CD8-positive, alpha-beta T cell (primary cell): ENCODE measurements at regions of chr1 and their contacts with region 1.

Region 1: DNA sequence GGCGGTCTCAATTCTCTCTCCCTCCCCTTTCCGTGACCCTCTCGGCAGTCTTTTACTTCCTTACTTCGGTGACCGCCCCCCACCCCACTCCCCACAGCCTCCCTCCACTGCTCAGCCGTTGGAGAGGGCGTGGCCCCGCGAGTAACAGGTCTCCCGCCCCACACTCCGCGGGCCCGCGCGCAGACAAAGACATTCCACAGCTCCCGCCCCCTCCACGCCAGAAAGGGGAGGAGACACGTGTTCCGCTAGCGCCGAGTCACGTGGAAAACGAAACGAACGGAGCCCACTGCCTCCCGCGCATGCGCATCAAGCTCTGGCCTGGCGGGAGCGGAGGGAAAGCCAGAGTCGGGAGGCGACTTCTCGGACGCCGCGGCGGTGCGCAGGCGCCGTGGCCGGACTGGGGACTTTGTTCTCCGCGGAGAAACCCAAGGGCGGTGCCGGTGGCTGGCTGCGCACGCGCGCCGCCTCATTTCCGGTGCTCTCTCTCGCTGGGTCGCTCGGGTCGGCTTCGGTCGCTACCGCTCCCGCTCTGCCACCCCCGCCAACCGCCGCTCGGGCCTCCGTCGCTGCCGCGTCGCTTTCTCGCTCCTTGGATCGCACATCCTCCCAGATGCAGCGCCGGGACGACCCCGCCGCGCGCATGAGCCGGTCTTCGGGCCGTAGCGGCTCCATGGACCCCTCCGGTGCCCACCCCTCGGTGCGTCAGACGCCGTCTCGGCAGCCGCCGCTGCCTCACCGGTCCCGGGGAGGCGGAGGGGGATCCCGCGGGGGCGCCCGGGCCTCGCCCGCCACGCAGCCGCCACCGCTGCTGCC is at the start of gene KHDRBS1:
- DNase-seq: peak; percentile 92 to 100 (median 97)
- ATAC-seq: peak; percentile 85
- H3K4me3 ChIP-seq: peak within 1 kb of the TSS; percentile 82 to 98
- H3K4me3 Mint-ChIP-seq: peak within 1 kb of the TSS; percentile 96
- H3K27ac ChIP-seq: peak within 1 kb of the TSS; percentile 93
- H3K27ac Mint-ChIP-seq: peak within 1 kb of the TSS; percentile 99
- H3K4me1 ChIP-seq: peaks cover 28% of the 10 kb centered on the region
- H3K4me1 Mint-ChIP-seq: peaks cover 30% of the 10 kb centered on the region
- H3K27me3 ChIP-seq: no peaks in the 10 kb centered on the region
- H3K27me3 Mint-ChIP-seq: no peaks in the 10 kb centered on the region
- CTCF ChIP-seq: no peak
- total RNA-seq, gene KHDRBS1: 102 TPM

Region 2: GRCh38 chr1:31938174-31938950 is 75.2 kb before region 1 on chr1 and contains the start of gene PTP4A2:
- CTCF ChIA-PET with region 1: interaction called, 5 read pairs
- POLR2A ChIA-PET with region 1: interaction called, 4 read pairs
- intact Hi-C with region 1: loop called (anchors 1 to 2 kb)
- DNase-seq: peak; percentile 54 to 91 (median 79)
- ATAC-seq: peak; percentile 60
- H3K4me3 ChIP-seq: peak within 1 kb of the TSS; percentile 68 to 93
- H3K4me3 Mint-ChIP-seq: peak within 1 kb of the TSS; percentile 100
- H3K27ac ChIP-seq: peak within 1 kb of the TSS; percentile 57 to 85
- H3K27ac Mint-ChIP-seq: peak within 1 kb of the TSS; percentile 99
- H3K4me1 ChIP-seq: peaks cover 77% of the 10 kb centered on the region
- H3K4me1 Mint-ChIP-seq: peaks cover 70% of the 10 kb centered on the region
- H3K27me3 ChIP-seq: no peaks in the 10 kb centered on the region
- H3K27me3 Mint-ChIP-seq: no peaks in the 10 kb centered on the region
- CTCF ChIP-seq: peak; percentile 43
- total RNA-seq, gene PTP4A2: 257 to 278 TPM

Region 3: DNA sequence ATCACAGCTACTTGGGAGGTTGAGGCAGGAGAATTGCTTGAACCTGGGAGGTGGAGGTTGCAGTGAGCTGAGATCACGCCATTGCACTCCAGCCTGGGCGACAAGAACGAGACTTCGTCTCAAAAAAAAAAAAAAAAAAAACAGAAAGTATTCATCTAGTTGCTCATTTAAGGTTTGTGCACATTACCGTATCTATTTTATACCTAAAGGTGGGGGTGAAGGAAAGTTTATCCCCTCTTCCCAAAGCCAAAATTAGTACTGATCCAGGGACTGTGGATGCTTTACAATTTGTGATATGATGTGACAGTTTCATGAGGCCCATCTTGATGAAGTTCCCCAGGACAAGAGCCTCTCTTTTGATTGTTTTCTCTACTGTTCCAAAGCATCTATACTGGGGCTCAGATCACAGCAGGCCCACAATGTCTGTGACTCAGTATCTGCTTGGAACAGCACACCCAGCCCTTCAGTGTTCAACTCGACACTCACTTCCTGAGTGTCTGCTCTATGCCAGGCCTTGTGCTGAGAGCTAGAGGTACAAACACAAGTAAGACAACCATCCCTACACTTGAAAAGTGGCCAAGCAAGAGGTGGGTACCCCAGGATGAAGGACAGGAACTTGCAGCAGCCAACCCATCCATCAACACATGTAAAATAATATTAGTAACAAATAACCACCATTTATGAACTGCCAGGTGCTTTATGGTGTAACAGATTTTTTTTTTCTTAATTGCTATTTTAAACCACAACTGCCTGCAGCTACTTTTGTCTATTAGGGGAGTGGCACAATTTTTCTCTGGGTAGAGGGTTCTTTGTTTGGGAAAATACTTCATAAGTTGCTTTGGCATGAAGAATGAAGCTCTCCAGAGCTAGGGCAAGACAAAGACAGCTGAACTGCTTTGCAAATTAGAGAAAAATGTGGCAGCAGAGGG is 28.9 kb before region 1 on chr1:
- CTCF ChIA-PET with region 1: interaction called, 5 read pairs
- POLR2A ChIA-PET with region 1: interaction called, 11 read pairs
- intact Hi-C with region 1: loop called in 1 of 2 experiments (anchors 2 kb)
- DNase-seq: peak in 8 of 9 experiments; percentile 16 to 66 (median 46)
- ATAC-seq: peak; percentile 69
- H3K4me3 ChIP-seq: no peak overlapping the region
- H3K4me3 Mint-ChIP-seq: peak overlapping the region; percentile 48
- H3K27ac ChIP-seq: peak overlapping the region in 1 of 2 experiments; percentile 80
- H3K27ac Mint-ChIP-seq: peak overlapping the region; percentile 92
- H3K4me1 ChIP-seq: peaks cover 52% of the 10 kb centered on the region
- H3K4me1 Mint-ChIP-seq: peaks cover 56% of the 10 kb centered on the region
- H3K27me3 ChIP-seq: no peaks in the 10 kb centered on the region
- H3K27me3 Mint-ChIP-seq: no peaks in the 10 kb centered on the region
- CTCF ChIP-seq: no peak

Region 4: DNA sequence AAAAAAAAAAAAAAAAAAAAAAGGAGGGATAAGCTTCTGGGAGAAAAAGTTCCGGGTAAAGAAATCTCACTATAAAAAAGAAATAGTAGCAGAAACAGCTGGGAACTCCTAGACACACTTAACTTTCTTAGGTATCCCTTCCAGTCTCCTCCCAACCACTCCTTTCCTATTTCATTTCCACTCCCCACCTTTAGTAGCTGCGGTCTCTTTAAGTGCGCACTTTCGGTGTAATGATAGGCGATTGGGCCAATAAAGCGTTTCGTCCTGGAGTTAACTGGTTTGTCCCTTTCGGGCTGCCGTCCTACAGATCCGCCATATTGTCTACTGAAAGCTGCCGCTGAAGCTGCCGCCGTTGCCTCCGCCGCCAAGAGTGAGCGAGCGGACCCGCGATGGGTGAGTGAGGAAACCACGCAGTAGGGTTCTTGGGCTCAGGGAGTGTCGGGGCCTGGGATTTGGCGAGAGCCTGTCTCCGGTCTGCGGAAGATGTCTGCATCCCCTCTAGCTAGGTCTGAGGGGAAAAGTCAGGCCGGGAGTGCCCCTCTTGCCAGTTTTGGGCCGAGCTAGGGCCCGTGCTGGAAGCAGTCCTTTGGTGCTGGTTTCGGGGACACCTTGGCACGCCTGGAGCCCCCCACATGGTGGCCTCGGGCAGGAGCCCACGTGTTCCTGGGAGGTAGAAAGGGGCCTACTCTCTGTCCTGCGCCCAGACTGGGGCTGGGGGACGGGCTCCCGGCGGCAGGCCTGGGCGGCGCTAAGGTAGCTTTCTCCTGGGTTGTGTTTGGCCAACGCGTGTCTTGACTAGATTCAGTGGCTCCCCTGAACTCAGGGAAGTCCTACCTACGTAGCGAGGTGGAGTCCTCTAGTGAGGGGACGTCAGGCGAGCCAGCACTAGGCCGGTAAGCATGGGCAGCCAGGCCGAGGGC is 94.4 kb after region 1 on chr1 and contains the start of gene KPNA6:
- CTCF ChIA-PET with region 1: interaction called, 3 read pairs
- POLR2A ChIA-PET with region 1: interaction called, 3 read pairs
- intact Hi-C with region 1: loop called in 1 of 2 experiments (anchors 1 kb)
- DNase-seq: peak; percentile 83 to 98 (median 90)
- ATAC-seq: peak; percentile 89
- H3K4me3 ChIP-seq: peak within 1 kb of the TSS; percentile 87 to 95
- H3K4me3 Mint-ChIP-seq: peak within 1 kb of the TSS; percentile 98
- H3K27ac ChIP-seq: peak within 1 kb of the TSS; percentile 84 to 93
- H3K27ac Mint-ChIP-seq: peak within 1 kb of the TSS; percentile 98
- H3K4me1 ChIP-seq: peaks cover 45% of the 10 kb centered on the region
- H3K4me1 Mint-ChIP-seq: peaks cover 50% of the 10 kb centered on the region
- H3K27me3 ChIP-seq: no peaks in the 10 kb centered on the region
- H3K27me3 Mint-ChIP-seq: no peaks in the 10 kb centered on the region
- CTCF ChIP-seq: no peak
- total RNA-seq, gene KPNA6: 51.7 to 58.7 TPM

Region 5: DNA sequence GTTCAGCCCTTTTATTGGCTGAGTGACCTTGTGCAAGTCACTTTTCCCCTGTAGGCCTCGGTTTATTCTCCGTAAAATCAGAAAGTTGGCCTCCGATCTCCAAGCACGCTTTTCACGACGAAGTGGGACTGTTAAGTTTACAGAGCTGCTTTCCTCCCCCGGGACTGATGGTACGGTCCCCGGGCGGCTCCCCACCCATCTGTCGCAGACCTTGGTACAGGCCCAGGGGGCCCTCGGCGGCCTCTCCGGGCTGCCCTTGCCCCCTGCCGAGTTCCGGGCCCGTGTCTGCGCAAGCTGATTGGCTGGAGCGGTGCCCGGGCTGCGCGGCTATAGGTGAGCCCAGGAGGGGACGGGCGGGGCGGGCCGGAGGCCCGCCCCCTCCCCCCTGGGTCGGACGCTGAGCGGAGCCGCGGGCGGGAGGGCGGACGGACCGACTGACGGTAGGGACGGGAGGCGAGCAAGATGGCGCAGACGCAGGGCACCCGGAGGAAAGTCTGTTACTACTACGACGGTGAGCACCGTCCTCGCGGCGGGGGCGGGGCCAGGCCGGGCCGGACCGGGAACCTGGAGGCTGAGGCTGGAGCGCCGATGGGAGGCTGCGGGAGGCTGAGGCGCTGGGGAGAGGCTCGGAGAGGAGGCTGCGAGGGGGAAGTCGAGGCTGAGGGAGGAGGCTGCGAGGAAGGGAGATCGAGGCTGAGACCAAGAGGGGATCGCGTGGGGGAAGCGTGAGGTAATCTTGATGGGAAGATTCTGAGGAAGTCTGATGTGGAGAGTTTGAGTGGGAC is 278.3 kb after region 1 on chr1 and contains the start of gene HDAC1:
- CTCF ChIA-PET with region 1: no interaction called
- POLR2A ChIA-PET with region 1: no interaction called
- intact Hi-C with region 1: loop called in 1 of 2 experiments (anchors 5 kb)
- DNase-seq: peak; percentile 94 to 98 (median 97)
- ATAC-seq: peak; percentile 93
- H3K4me3 ChIP-seq: peak within 1 kb of the TSS; percentile 84 to 92
- H3K4me3 Mint-ChIP-seq: peak within 1 kb of the TSS; percentile 100
- H3K27ac ChIP-seq: peak within 1 kb of the TSS; percentile 68 to 69
- H3K27ac Mint-ChIP-seq: peak within 1 kb of the TSS; percentile 98
- H3K4me1 ChIP-seq: peaks cover 45% of the 10 kb centered on the region
- H3K4me1 Mint-ChIP-seq: peaks cover 52% of the 10 kb centered on the region
- H3K27me3 ChIP-seq: no peaks in the 10 kb centered on the region
- H3K27me3 Mint-ChIP-seq: no peaks in the 10 kb centered on the region
- CTCF ChIP-seq: no peak
- total RNA-seq, gene HDAC1: 57.8 to 61.4 TPM

Region 6: GRCh38 chr1:32650752-32651460 is 637.3 kb after region 1 on chr1 and contains the start of gene RBBP4:
- CTCF ChIA-PET with region 1: no interaction called
- POLR2A ChIA-PET with region 1: no interaction called
- intact Hi-C with region 1: loop called in 1 of 2 experiments (anchors 5 kb)
- DNase-seq: peak; percentile 96 to 100 (median 99)
- ATAC-seq: peak; percentile 83
- H3K4me3 ChIP-seq: peak within 1 kb of the TSS; percentile 82 to 97
- H3K4me3 Mint-ChIP-seq: peak within 1 kb of the TSS; percentile 93
- H3K27ac ChIP-seq: peak within 1 kb of the TSS; percentile 98 to 99
- H3K27ac Mint-ChIP-seq: peak within 1 kb of the TSS; percentile 99
- H3K4me1 ChIP-seq: peaks cover 51% of the 10 kb centered on the region
- H3K4me1 Mint-ChIP-seq: peaks cover 60% of the 10 kb centered on the region
- H3K27me3 ChIP-seq: no peaks in the 10 kb centered on the region
- H3K27me3 Mint-ChIP-seq: no peaks in the 10 kb centered on the region
- CTCF ChIP-seq: no peak
- total RNA-seq, gene RBBP4: 109 to 121 TPM